Breast epithelium (tissue), 4 donors: ENCODE measurements at regions of chr22 and their contacts with region 1.

Region 1: DNA sequence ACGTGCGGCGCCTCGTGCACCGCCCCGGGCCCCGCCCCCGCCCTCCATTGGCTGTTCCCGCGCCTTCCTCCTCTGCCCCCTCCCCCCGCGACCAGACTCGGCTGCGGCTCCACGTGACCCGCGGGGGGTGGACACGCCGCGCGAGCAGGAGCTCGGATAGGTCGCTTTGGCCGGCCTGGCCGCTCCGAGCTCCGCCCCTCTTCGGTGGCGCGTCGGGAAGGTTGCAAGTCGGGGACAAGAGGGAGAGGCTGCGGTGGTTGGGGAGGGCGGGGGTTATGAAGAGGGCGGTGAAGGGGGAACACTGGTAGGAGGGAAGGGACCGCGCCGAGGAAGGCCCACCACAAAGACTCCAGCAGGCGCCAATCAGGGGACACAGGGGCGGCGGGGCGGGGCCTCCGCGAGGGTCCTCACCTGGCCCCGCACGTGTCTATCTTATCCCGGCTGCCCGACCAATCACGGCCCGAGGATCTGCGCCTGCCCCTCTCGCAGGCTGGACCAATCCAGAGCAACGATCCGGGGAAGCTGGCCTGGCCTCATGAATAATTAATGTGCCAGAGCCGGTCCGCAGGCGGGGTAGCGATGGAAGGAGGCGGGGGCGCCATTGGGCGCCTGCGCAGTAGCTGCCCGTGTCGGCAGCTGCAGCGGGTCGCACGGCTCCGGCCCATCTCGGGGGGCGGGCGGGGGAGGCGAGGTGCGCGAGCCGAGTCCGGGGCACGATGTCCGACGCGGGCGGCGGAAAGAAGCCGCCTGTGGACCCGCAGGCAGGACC is at the start of gene TEF:
- DNase-seq: peak; percentile 99
- H3K4me3 ChIP-seq: peak within 1 kb of the TSS; percentile 74 to 86 (median 80)
- H3K27ac ChIP-seq: peak within 1 kb of the TSS; percentile 95 to 99
- H3K4me1 ChIP-seq: peaks cover 3 to 10% of the 10 kb centered on the region in 2 donors
- H3K27me3 ChIP-seq: no peaks in the 10 kb centered on the region
- CTCF ChIP-seq: no peak
- POLR2A ChIP-seq: peak; percentile 17
- total RNA-seq, gene TEF: 8.8 to 26.6 (median 15.7) TPM

Region 2: GRCh38 chr22:39979048-39979447 is 1402.5 kb before region 1 on chr22:
- intact Hi-C with region 1: loop called (anchors 5 kb)
- DNase-seq: no peak
- H3K4me3 ChIP-seq: no peak overlapping the region
- H3K27ac ChIP-seq: no peak overlapping the region
- H3K4me1 ChIP-seq: no peaks in the 10 kb centered on the region
- H3K27me3 ChIP-seq: no peaks in the 10 kb centered on the region
- CTCF ChIP-seq: no peak
- POLR2A ChIP-seq: no peak

Region 3: GRCh38 chr22:40922484-40923303 is 458.8 kb before region 1 on chr22:
- intact Hi-C with region 1: no loop called
- DNase-seq: no peak
- H3K4me3 ChIP-seq: peak overlapping the region in 1 of 3 donors; percentile 26
- H3K27ac ChIP-seq: no peak overlapping the region
- H3K4me1 ChIP-seq: no peaks in the 10 kb centered on the region
- H3K27me3 ChIP-seq: no peaks in the 10 kb centered on the region
- CTCF ChIP-seq: peak in 2 of 3 donors; percentile 78 to 82
- POLR2A ChIP-seq: no peak

Region 4: GRCh38 chr22:41367039-41367679 is 14.4 kb before region 1 on chr22:
- intact Hi-C with region 1: no loop called
- DNase-seq: peak; percentile 91 to 92
- H3K4me3 ChIP-seq: peak overlapping the region; percentile 40 to 60 (median 54)
- H3K27ac ChIP-seq: peak overlapping the region; percentile 42 to 72
- H3K4me1 ChIP-seq: peaks cover 6 to 12% of the 10 kb centered on the region in 2 donors
- H3K27me3 ChIP-seq: no peaks in the 10 kb centered on the region
- CTCF ChIP-seq: peak in 1 of 3 donors; percentile 33
- POLR2A ChIP-seq: no peak